ENCODE measurements at regions of chr3 and their contacts with region 1.

Region 1: DNA sequence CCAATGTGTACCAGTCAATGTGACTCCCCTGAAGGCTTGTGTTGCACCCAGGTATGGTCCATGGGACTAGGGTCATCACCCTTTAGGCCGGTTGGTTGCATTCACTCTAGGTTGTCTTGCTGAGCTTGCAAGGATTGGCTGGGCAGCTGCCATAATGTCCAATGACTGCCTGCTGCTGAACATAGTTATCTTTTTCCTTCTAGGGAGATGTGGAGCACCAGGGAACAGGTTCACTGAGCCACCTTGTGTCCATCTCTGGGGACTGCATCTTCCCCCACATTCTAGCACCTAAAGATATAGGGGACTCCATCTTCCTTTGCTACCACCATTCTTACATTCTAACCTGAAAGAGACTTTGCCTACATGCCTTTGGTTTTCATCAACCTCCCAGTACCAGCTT is 580.4 kb upstream of the TBL1XR1 start:
- DNase-seq: peak; percentile 75
- H3K4me3 Mint-ChIP-seq: no peak overlapping the region
- H3K27ac Mint-ChIP-seq: no peak overlapping the region
- H3K4me1 Mint-ChIP-seq: peaks cover 12% of the 10 kb centered on the region
- H3K27me3 Mint-ChIP-seq: no peaks in the 10 kb centered on the region
- CTCF ChIP-seq: peak; percentile 95

Region 2: GRCh38 chr3:177378168-177378567 is 399.5 kb before region 1 on chr3:
- CTCF ChIA-PET with region 1: no interaction called
- intact Hi-C with region 1: no loop called
- DNase-seq: no peak
- H3K4me3 Mint-ChIP-seq: no peak overlapping the region
- H3K27ac Mint-ChIP-seq: no peak overlapping the region
- H3K4me1 Mint-ChIP-seq: peaks cover 13% of the 10 kb centered on the region
- H3K27me3 Mint-ChIP-seq: no peaks in the 10 kb centered on the region
- CTCF ChIP-seq: no peak

Region 3: GRCh38 chr3:177478170-177478860 is 299.4 kb before region 1 on chr3:
- CTCF ChIA-PET with region 1: no interaction called
- intact Hi-C with region 1: loop called (anchors 1 kb)
- DNase-seq: peak; percentile 77
- H3K4me3 Mint-ChIP-seq: peak overlapping the region; percentile 16
- H3K27ac Mint-ChIP-seq: peak overlapping the region; percentile 4
- H3K4me1 Mint-ChIP-seq: peaks cover 39% of the 10 kb centered on the region
- H3K27me3 Mint-ChIP-seq: no peaks in the 10 kb centered on the region
- CTCF ChIP-seq: no peak

Region 4: GRCh38 chr3:177597311-177598096 is 180.2 kb before region 1 on chr3:
- CTCF ChIA-PET with region 1: no interaction called
- intact Hi-C with region 1: loop called (anchors 2 kb)
- DNase-seq: no peak
- H3K4me3 Mint-ChIP-seq: no peak overlapping the region
- H3K27ac Mint-ChIP-seq: no peak overlapping the region
- H3K4me1 Mint-ChIP-seq: peaks cover 61% of the 10 kb centered on the region
- H3K27me3 Mint-ChIP-seq: no peaks in the 10 kb centered on the region
- CTCF ChIP-seq: no peak

Region 5: DNA sequence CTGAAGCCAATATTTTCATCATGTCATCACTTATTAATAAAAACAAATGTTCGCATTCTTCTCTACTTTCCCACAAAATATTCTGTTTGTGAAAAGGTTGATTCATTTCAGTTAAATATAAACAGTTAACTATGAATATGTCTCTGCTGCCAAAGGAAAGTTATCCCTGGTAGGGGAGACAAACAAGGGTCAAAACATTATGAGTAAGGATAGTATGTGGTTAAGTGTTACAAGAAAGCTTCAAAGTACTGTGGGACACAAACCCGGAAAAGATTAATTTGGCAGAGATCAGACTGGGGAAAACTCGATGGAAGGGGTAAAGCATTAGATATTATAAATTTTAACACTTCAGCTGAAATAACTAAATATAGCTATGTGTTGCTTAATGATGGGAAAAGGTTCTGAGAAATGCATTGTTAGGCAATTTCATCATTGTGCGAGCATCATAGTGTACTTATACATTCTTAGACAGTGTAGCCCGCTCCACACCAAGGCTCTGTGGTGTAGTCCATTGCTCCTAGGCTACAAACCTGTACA is 144.0 kb before region 1 on chr3:
- CTCF ChIA-PET with region 1: no interaction called
- intact Hi-C with region 1: loop called (anchors 5 kb)
- DNase-seq: peak; percentile 43
- H3K4me3 Mint-ChIP-seq: no peak overlapping the region
- H3K27ac Mint-ChIP-seq: peak overlapping the region; percentile 1
- H3K4me1 Mint-ChIP-seq: peaks cover 14% of the 10 kb centered on the region
- H3K27me3 Mint-ChIP-seq: no peaks in the 10 kb centered on the region
- CTCF ChIP-seq: no peak

Region 6: GRCh38 chr3:178155521-178155920 is 377.8 kb after region 1 on chr3:
- CTCF ChIA-PET with region 1: no interaction called
- intact Hi-C with region 1: loop called (anchors 5 kb)
- DNase-seq: peak; percentile 16
- H3K4me3 Mint-ChIP-seq: no peak overlapping the region
- H3K27ac Mint-ChIP-seq: no peak overlapping the region
- H3K4me1 Mint-ChIP-seq: no peaks in the 10 kb centered on the region
- H3K27me3 Mint-ChIP-seq: no peaks in the 10 kb centered on the region
- CTCF ChIP-seq: no peak